ENCODE measurements at regions of chr1 and their contacts with region 1.

Region 1: GRCh38 chr1:9825454-9826090 is 1.8 kb upstream of the CLSTN1 start:
- DNase-seq: no peak
- H3K4me3 ChIP-seq: no peak overlapping the region; the same call in 1 of the 2 replicates
- CTCF ChIP-seq: no peak

Region 2: DNA sequence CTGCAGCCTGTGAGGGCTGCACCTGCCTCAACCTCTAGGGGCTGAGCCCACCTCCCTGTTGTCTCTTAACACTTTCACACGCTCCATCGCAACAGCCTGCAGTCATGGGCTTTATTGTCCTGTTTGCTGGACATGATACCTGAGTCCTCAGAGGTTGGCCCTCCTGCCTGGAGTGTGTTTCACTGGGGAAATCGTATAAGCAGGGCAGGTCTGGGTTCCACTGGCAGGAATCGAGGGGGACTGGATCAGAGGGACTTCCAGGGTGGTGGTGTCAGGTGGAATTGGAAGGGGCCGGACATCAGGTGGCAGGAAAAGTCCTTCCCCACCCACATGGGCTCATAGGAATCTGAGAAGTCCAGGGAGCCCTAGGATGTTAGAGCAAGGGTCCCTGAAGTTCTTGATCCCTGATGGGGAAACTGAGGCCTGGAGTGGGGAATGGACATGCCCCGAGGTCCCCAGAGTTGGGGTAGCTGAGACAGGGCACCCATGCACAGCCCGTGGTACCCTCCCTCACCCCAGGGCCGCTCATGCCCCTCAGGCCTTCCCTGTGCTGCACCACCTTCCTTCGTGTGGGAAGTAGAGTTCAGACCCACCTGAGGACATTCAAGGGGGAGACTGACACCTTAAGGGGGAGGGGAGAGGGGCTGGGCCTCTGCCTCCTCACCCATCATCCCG is 107.4 kb before region 1 on chr1:
- CTCF ChIA-PET with region 1: no interaction called
- POLR2A ChIA-PET with region 1: no interaction called
- DNase-seq: no peak
- H3K4me3 ChIP-seq: no peak overlapping the region
- CTCF ChIP-seq: no peak

Region 3: DNA sequence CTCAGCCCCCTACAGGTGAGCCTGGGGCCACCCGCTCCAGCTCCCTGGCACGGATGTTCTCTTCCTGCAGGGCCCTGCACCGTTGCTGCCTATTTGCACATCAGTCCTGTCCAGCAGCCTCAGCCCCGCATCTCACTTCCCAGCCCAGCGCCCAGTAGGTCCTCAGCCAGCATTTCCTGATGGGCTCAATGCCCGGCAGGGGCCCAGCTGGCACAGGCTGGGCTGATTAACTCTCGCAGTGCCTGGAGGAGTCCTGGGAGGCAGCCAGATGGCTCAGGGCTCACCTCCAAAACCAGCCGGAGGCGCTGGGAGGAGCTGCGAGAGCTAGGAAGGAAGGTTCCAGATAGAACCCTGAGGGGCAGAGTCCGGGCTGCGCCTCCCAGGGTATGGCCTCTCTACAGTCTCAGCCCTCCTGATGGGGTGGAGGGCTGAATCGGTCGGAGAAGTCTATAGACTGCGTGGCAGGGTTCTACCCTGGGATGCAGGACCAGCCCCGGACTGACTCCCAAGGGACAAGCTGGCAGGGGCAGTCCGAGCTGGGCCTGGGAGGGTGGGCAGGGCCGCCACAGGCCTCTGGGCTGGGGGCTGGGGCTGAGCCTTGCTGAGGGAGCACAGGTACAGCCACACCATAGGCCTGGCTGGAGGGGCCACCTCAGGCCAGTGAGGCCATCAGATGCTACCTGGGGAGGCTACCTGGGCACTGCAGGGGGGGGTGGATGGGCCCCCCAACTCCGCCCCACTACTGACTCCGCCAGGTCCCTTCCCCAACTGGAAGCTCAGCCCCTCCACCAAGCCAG is 17.4 kb after region 1 on chr1:
- CTCF ChIA-PET with region 1: interaction called, 16 read pairs
- POLR2A ChIA-PET with region 1: no interaction called
- DNase-seq: no peak
- H3K4me3 ChIP-seq: no peak overlapping the region
- CTCF ChIP-seq: no peak

Region 4: GRCh38 chr1:9852410-9853248 is 27.1 kb after region 1 on chr1:
- CTCF ChIA-PET with region 1: interaction called, 11 read pairs
- POLR2A ChIA-PET with region 1: no interaction called
- DNase-seq: no peak
- H3K4me3 ChIP-seq: no peak overlapping the region
- CTCF ChIP-seq: no peak